ENCODE measurements at regions of chr9 and their contacts with region 1.

Region 1: GRCh38 chr9:133030317-133031129 is at the start of gene GTF3C5:
- DNase-seq: peak; percentile 99
- ATAC-seq: peak; percentile 98
- H3K4me3 ChIP-seq: peak within 1 kb of the TSS; percentile 94
- H3K27ac ChIP-seq: peak within 1 kb of the TSS; percentile 89
- H3K4me1 ChIP-seq: peaks cover 6% of the 10 kb centered on the region
- H3K27me3 ChIP-seq: no peaks in the 10 kb centered on the region
- CTCF ChIP-seq: no peak
- POLR2A ChIP-seq: peak; percentile 60
- RAD21 ChIP-seq: no peak
- total RNA-seq, gene GTF3C5: 49.1 and 51.1 TPM in 2 replicates

Region 2: DNA sequence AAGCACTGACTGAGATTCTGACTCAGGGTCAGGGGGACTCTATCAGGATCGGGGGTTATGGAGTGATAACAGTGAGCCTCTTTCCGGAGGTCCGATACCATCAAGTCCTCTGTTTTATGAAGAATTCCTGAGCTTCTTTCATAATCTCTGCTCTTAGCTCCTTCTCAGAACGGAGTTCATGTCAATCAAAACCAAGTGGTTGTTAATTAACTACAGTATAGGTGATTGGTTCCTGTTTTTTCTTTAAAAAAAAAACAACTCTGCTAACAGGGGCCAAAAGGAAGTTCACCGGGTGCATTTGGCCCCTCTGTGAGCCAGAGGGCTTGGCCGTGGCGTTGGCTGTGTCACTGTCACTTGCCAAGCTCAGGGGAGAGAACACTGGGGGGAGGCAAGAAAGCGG is 48.1 kb before region 1 on chr9:
- CTCF ChIA-PET with region 1: no interaction called
- POLR2A ChIA-PET with region 1: no interaction called
- dilution Hi-C with region 1: no loop called
- in situ Hi-C with region 1: no loop called
- intact Hi-C with region 1: no loop called
- DNase-seq: no peak
- ATAC-seq: no peak
- H3K4me3 ChIP-seq: no peak overlapping the region
- H3K27ac ChIP-seq: no peak overlapping the region
- H3K4me1 ChIP-seq: no peaks in the 10 kb centered on the region
- H3K27me3 ChIP-seq: peaks cover 81% of the 10 kb centered on the region
- CTCF ChIP-seq: no peak
- POLR2A ChIP-seq: no peak
- RAD21 ChIP-seq: no peak

Region 3: DNA sequence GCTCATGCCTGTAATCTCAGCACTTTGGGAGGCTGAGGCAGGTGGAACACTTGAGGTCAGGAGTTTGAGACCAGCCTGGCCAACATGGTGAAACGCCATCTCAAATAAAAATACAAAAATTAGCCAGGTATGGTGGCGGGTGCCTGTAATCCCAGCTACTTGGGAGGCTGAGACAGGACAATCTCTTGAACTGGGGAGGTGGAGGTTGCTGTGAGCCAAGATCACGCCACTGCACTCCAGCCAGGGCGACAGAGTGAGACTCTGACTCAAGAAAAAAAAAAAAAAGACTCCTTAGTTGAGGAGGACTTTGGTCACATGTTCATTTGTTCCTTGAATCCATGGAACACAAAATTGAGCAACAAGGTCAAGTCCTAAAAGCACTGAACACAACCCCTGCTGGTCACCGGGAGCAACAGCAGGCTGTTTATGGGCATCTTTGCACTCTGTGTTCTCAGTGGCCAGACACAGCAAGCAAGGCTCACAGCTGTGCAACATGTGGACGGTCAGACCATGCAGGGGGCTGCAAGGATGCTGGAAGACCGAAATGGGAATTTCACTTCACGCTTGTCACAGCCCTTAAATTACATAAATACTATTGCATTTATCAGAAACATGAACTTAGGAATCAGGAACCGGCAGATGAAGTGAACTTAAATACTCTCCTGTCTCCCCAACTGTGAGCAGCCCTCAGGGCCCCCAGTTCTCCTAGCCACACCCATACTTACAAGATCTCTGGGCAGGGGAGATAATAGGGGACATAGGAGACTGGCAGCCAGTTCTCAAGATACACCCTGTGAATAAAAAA is 130.4 kb after region 1 on chr9:
- CTCF ChIA-PET with region 1: interaction called, 10 read pairs
- POLR2A ChIA-PET with region 1: no interaction called
- dilution Hi-C with region 1: no loop called
- in situ Hi-C with region 1: no loop called
- intact Hi-C with region 1: no loop called
- DNase-seq: peak; percentile 61
- ATAC-seq: peak; percentile 72
- H3K4me3 ChIP-seq: no peak overlapping the region
- H3K27ac ChIP-seq: no peak overlapping the region
- H3K4me1 ChIP-seq: peaks cover 10% of the 10 kb centered on the region; the same call in 1 of the 2 replicates
- H3K27me3 ChIP-seq: no peaks in the 10 kb centered on the region; the same call in 1 of the 2 replicates
- CTCF ChIP-seq: peak; percentile 65
- POLR2A ChIP-seq: no peak
- RAD21 ChIP-seq: peak; percentile 35

Region 4: DNA sequence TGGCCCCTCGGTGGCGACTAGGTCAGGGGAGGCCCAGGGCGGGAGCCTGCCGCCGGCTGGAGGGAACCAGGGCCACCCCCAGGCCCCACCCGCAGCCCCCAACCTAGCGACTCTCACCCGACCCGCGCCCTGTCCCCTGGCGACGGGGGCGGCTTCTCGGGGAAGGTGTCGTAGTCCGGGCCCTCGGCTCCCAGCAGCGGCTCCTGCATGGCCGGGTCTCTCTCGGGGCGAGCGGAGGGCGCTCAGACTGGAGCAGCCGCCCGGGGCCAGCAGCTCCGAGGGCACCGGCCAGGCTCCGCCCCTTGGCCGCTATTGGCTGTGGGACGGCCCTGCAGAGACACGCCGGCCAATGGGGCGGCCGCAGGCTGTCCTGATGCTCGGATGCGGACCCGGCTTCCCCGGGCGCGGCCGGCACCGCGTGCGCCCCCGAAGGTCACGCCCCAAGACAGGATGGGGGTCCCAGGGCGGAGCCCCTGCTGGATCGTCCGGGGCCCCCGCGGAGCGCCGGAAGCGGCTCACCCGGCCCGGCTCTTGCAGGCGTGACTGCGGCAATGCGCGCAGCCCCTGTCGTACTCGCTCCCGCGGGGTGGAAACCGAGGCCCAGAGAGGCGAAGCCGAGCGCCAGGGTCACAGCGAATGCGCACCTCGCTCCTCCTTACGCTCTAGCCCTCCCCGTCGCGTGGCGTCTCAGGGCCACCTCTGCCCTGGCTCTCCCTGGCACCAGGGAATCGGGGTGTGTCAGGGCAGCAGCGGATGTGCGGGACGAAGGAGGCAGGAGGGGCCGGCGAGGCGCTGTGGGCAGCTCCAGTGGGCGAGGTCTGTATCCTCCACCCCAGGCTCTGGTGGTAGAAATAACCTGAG is 448.6 kb after region 1 on chr9 and contains the start of gene SLC2A6:
- CTCF ChIA-PET with region 1: no interaction called
- POLR2A ChIA-PET with region 1: no interaction called
- dilution Hi-C with region 1: no loop called
- in situ Hi-C with region 1: loop called (anchors 25 kb)
- intact Hi-C with region 1: no loop called
- DNase-seq: peak; percentile 63
- ATAC-seq: peak; percentile 100
- H3K4me3 ChIP-seq: peak within 1 kb of the TSS; percentile 45
- H3K27ac ChIP-seq: no peak within 1 kb of the TSS; the same call in 1 of the 2 replicates
- H3K4me1 ChIP-seq: peaks cover 3% of the 10 kb centered on the region; the same call in 1 of the 2 replicates
- H3K27me3 ChIP-seq: peaks cover 2% of the 10 kb centered on the region; the same call in 1 of the 2 replicates
- CTCF ChIP-seq: no peak
- POLR2A ChIP-seq: no peak
- RAD21 ChIP-seq: no peak
- total RNA-seq, gene SLC2A6: 2.9 and 3.1 TPM in 2 replicates

Measured in IMR-90 (cell line).